IMR-90 (cell line): ENCODE measurements at regions of chr3 and their contacts with region 1.

Region 1: GRCh38 chr3:50542177-50543034 is 25.1 kb downstream of the C3orf18 start:
- DNase-seq: peak; percentile 52
- ATAC-seq: peak; percentile 91
- H3K4me3 ChIP-seq: no peak overlapping the region
- H3K27ac ChIP-seq: no peak overlapping the region
- H3K4me1 ChIP-seq: no peaks in the 10 kb centered on the region
- H3K27me3 ChIP-seq: peaks cover 40% of the 10 kb centered on the region
- CTCF ChIP-seq: peak; percentile 81
- POLR2A ChIP-seq: no peak
- RAD21 ChIP-seq: peak; percentile 80

Region 2: GRCh38 chr3:50436114-50436674 is 106.2 kb before region 1 on chr3:
- CTCF ChIA-PET with region 1: interaction called, 4 read pairs
- POLR2A ChIA-PET with region 1: no interaction called
- dilution Hi-C with region 1: no loop called
- in situ Hi-C with region 1: loop called (anchors 10 kb)
- intact Hi-C with region 1: loop called (anchors 1 kb)
- DNase-seq: peak; percentile 3
- ATAC-seq: peak; percentile 96
- H3K4me3 ChIP-seq: no peak overlapping the region
- H3K27ac ChIP-seq: no peak overlapping the region
- H3K4me1 ChIP-seq: no peaks in the 10 kb centered on the region
- H3K27me3 ChIP-seq: peaks cover 59% of the 10 kb centered on the region
- CTCF ChIP-seq: peak; percentile 63
- POLR2A ChIP-seq: no peak
- RAD21 ChIP-seq: peak; percentile 77

Region 3: GRCh38 chr3:51879937-51880336 is 1337.5 kb after region 1 on chr3:
- CTCF ChIA-PET with region 1: no interaction called
- POLR2A ChIA-PET with region 1: no interaction called
- dilution Hi-C with region 1: no loop called
- in situ Hi-C with region 1: no loop called
- intact Hi-C with region 1: no loop called
- DNase-seq: no peak
- ATAC-seq: no peak
- H3K4me3 ChIP-seq: no peak overlapping the region
- H3K27ac ChIP-seq: no peak overlapping the region
- H3K4me1 ChIP-seq: no peaks in the 10 kb centered on the region
- H3K27me3 ChIP-seq: no peaks in the 10 kb centered on the region; the same call in 1 of the 2 replicates
- CTCF ChIP-seq: no peak
- POLR2A ChIP-seq: no peak
- RAD21 ChIP-seq: no peak